Heart left ventricle (tissue), 16 donors: ENCODE measurements at regions of chr7 and their contacts with region 1.

Region 1: GRCh38 chr7:8232999-8233847 is 28.7 kb downstream of the ICA1 start:
- DNase-seq: peak in 2 of 5 donors; percentile 41 to 68
- ATAC-seq: peak; percentile 79 to 98 (median 94)
- H3K4me3 ChIP-seq: no peak overlapping the region
- H3K27ac ChIP-seq: peak overlapping the region in 8 of 12 donors; percentile 13 to 81 (median 44)
- H3K4me1 ChIP-seq: peaks cover 0 to 30% (median 17%) of the 10 kb centered on the region in 12 donors
- H3K27me3 ChIP-seq: no peaks in the 10 kb centered on the region
- CTCF ChIP-seq: no peak
- POLR2A ChIP-seq: no peak

Region 2: GRCh38 chr7:8149222-8149621 is 84.0 kb before region 1 on chr7:
- intact Hi-C with region 1: no loop called
- DNase-seq: no peak
- ATAC-seq: peak in 2 of 4 donors; percentile 35 to 59
- H3K4me3 ChIP-seq: no peak overlapping the region
- H3K27ac ChIP-seq: peak overlapping the region in 1 of 12 donors; percentile 2
- H3K4me1 ChIP-seq: peaks cover 0 to 32% (median 14%) of the 10 kb centered on the region in 12 donors
- H3K27me3 ChIP-seq: no peaks in the 10 kb centered on the region
- CTCF ChIP-seq: no peak
- POLR2A ChIP-seq: no peak

Region 3: GRCh38 chr7:8274589-8274988 is 41.4 kb after region 1 on chr7:
- intact Hi-C with region 1: no loop called
- DNase-seq: no peak
- ATAC-seq: no peak
- H3K4me3 ChIP-seq: no peak overlapping the region
- H3K27ac ChIP-seq: no peak overlapping the region
- H3K4me1 ChIP-seq: no peaks in the 10 kb centered on the region
- H3K27me3 ChIP-seq: no peaks in the 10 kb centered on the region
- CTCF ChIP-seq: no peak
- POLR2A ChIP-seq: no peak

Region 4: GRCh38 chr7:8284606-8285005 is 51.4 kb after region 1 on chr7:
- intact Hi-C with region 1: loop called in 2 of 10 experiments (anchors 5 to 10 kb)
- DNase-seq: peak in 1 of 5 donors; percentile 14
- ATAC-seq: peak in 1 of 4 donors; percentile 9
- H3K4me3 ChIP-seq: no peak overlapping the region
- H3K27ac ChIP-seq: peak overlapping the region; percentile 1 to 90 (median 82)
- H3K4me1 ChIP-seq: peaks cover 0 to 33% (median 8%) of the 10 kb centered on the region in 12 donors
- H3K27me3 ChIP-seq: no peaks in the 10 kb centered on the region
- CTCF ChIP-seq: no peak
- POLR2A ChIP-seq: no peak

Region 5: DNA sequence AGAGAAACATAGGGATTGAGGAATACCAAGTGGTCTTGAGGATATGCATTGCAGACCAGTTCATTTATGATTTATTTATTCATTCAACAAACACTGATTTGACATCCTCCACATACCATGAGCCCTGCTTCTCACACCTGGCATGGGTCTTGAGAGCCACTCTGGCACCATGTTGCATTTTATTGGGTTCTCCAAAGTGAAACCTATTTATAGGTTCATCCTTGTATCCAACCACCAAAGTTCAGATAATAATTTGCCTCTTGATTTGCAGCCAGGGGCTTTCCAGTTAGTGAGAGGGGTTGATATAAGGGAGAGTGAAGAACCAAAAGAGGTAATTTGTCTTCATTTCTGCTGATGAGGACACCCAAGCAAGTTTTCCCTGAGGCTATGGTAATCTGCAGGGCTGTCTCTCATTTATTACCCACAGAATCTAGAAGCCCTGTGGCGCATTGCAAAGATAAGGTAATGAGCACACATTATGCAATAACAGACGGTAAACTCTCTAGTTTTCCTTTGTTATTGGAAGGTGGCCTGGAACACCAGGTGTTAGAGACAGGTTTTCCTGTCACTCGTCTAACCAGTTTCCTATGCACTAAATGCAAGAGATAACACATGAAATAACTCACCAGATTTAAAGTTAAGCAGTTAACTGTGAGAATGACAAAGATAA is 57.6 kb after region 1 on chr7:
- intact Hi-C with region 1: loop called in 6 of 10 experiments (anchors 5 to 10 kb)
- DNase-seq: no peak
- ATAC-seq: peak in 2 of 4 donors; percentile 81 to 85
- H3K4me3 ChIP-seq: no peak overlapping the region
- H3K27ac ChIP-seq: peak overlapping the region in 1 of 12 donors; percentile 48
- H3K4me1 ChIP-seq: peaks cover 0 to 20% (median 2%) of the 10 kb centered on the region in 12 donors
- H3K27me3 ChIP-seq: no peaks in the 10 kb centered on the region
- CTCF ChIP-seq: no peak
- POLR2A ChIP-seq: no peak

Region 6: DNA sequence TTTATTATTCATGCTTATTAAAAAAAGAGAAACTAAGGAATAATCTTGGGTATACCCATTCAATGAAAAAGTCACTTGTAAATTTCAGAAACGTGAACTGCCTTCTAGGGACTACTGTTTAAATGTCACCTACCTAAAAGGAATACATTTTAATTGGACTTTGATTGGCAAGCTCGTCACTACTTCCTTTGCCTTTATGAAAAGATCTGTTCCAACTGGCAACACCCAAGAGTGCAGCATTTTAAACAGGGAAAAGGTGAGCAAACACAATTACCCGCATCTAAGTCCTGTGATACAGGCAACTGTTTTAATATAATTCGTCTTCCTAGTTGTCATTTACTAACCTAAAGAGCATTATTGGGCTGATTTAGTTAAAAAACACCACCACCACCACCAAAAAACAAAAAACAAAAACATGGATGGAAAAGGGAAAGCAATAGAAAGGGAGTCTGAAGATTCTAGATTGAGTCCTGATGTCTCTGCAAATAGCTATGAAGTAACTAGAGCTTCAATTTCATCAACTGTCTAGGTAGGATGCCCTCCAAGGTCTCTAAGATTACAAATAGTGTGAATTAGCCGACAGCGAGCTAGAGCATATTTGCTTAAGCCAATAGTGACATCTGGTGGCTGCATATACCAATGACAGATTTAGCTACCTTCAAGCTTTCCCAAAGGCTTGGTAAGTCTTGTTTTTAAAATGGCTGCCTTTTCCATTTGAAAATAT is 62.6 kb after region 1 on chr7:
- intact Hi-C with region 1: loop called in 4 of 10 experiments (anchors 5 to 10 kb)
- DNase-seq: peak in 2 of 5 donors; percentile 29 to 40
- ATAC-seq: peak; percentile 64 to 97 (median 91)
- H3K4me3 ChIP-seq: no peak overlapping the region
- H3K27ac ChIP-seq: no peak overlapping the region
- H3K4me1 ChIP-seq: peaks cover 0 to 1% (median 0%) of the 10 kb centered on the region in 12 donors
- H3K27me3 ChIP-seq: no peaks in the 10 kb centered on the region
- CTCF ChIP-seq: peak; percentile 55 to 86 (median 76)
- POLR2A ChIP-seq: no peak

Region 7: GRCh38 chr7:8714791-8715190 is 481.6 kb after region 1 on chr7:
- intact Hi-C with region 1: no loop called
- DNase-seq: no peak
- ATAC-seq: no peak
- H3K4me3 ChIP-seq: no peak overlapping the region
- H3K27ac ChIP-seq: no peak overlapping the region
- H3K4me1 ChIP-seq: no peaks in the 10 kb centered on the region
- H3K27me3 ChIP-seq: no peaks in the 10 kb centered on the region
- CTCF ChIP-seq: no peak
- POLR2A ChIP-seq: no peak